ENCODE measurements at regions of chr11 and their contacts with region 1.

Region 1: DNA sequence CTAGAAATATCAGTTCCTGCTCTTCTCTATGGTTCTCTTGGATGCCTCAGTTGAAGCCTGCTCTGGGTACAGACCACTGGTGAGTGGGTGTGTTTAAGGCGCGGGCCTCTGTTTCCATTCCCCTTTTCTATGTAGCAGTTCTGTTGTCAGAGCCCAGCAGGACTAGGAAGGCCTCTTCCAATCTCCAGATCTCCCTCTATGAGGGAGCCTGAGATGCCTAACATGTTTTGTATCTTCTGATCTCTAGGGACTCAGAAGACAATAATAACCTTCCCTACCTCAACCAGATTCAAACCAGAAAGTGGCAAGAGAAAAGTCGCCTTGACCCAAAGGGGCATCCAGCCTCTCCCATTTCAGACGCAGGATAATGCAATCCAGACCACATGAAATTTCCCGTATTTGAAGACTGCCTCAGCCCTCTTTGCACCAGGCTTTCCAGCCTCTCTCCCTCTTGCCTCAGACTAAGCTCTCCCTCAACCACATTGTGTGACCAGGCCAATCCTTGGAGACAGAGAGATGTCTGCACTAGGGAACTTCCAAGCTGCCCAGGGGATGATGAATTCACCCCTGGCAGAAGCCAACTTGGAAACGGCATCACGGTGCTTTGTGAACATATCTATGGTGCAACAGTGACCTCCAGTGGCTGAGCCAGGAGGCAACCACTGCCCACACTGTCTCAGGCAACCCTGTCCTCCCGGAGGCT is 150.1 kb upstream of the UBASH3B start:
- DNase-seq: peak; percentile 84
- H3K4me3 ChIP-seq: no peak overlapping the region
- H3K27ac ChIP-seq: no peak overlapping the region
- H3K4me1 ChIP-seq: no peaks in the 10 kb centered on the region
- H3K27me3 ChIP-seq: peaks cover 2% of the 10 kb centered on the region
- CTCF ChIP-seq: peak; percentile 93 to 97

Region 2: GRCh38 chr11:121318848-121319834 is 1186.3 kb before region 1 on chr11:
- CTCF ChIA-PET with region 1: no interaction called
- dilution Hi-C with region 1: no loop called
- in situ Hi-C with region 1: no loop called
- intact Hi-C with region 1: loop called (anchors 1 kb)
- DNase-seq: peak; percentile 49
- H3K4me3 ChIP-seq: no peak overlapping the region
- H3K27ac ChIP-seq: no peak overlapping the region
- H3K4me1 ChIP-seq: peaks cover 4% of the 10 kb centered on the region
- H3K27me3 ChIP-seq: no peaks in the 10 kb centered on the region
- CTCF ChIP-seq: peak; percentile 79 to 89

Region 3: DNA sequence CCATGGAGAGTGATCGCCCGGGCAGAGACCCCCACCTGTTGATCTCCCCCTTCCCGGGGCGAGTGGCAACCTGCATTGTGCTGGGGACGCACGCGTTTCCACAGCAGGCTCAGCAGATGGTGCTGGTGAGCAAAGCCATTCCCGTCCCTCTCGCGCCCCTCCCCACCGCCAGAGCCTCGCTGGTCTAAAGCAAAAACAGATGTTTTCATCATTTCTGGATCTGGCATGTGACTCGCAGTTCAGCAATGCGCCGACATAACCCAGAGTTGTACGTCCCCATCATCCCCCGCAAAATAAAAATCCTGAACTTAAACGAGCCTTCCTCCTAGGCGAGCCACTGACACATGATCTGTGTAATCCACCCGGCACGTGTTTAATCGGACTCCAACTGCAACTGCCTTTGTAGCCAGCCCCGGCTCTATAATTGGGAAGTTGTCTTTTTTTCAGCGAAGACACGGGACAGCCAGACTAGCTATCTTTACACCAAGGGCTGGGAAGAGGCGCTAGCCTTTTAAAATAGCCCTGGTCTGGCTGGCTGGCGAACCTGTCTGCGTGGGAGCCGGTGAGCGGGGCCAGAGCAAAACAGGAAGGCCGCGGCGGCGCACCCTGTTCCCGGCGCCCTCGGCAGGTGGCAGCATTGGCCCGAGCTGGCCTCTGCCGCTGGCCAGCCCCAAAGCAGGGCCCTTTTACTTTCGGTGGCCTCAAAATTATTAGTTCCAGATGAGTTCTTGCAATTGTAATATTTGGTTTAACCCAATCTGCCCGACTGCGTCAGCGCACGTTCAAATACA is 849.7 kb before region 1 on chr11:
- CTCF ChIA-PET with region 1: no interaction called
- dilution Hi-C with region 1: no loop called
- in situ Hi-C with region 1: loop called (anchors 5 kb)
- intact Hi-C with region 1: loop called (anchors 1 kb)
- DNase-seq: peak; percentile 73
- H3K4me3 ChIP-seq: peak overlapping the region; percentile 45 to 59 (median 56)
- H3K27ac ChIP-seq: peak overlapping the region; percentile 58
- H3K4me1 ChIP-seq: peaks cover 20% of the 10 kb centered on the region
- H3K27me3 ChIP-seq: no peaks in the 10 kb centered on the region
- CTCF ChIP-seq: peak; percentile 77 to 97

Region 4: DNA sequence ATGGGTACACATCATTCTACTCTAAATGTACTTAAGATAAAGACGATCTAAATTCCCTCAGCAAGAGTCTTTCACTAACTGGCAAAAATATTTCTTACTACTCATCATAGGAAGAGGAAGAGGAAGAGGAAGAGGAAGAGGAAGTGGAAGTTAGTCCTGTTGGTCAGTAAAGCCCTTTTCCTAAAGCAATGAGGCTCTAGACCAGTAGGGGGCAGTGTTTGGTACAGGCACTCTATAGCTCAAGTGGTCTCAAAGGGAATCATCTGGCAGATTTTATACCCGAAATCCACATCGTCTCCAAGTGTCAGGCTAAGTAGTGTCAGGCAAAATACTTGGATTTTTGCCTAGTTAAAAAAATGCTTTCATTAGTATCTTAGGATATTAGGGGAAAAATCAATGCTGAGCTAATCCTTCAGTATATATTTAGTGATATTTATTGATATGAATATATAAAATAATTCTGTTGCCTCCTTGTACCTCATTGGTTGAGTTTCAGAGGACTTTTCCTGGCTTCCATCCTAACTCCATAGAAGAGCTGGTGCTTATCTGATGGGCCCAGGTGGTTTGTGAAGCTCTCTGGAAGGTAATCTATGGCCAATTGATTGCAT is 397.2 kb before region 1 on chr11:
- CTCF ChIA-PET with region 1: no interaction called
- dilution Hi-C with region 1: no loop called
- in situ Hi-C with region 1: loop called (anchors 25 kb)
- intact Hi-C with region 1: no loop called
- DNase-seq: no peak
- H3K4me3 ChIP-seq: no peak overlapping the region
- H3K27ac ChIP-seq: no peak overlapping the region
- H3K4me1 ChIP-seq: peaks cover 28% of the 10 kb centered on the region
- H3K27me3 ChIP-seq: no peaks in the 10 kb centered on the region
- CTCF ChIP-seq: peak; percentile 64 to 83

Region 5: GRCh38 chr11:122215244-122215992 is 290.0 kb before region 1 on chr11:
- CTCF ChIA-PET with region 1: interaction called, 6 read pairs
- dilution Hi-C with region 1: no loop called
- in situ Hi-C with region 1: loop called (anchors 5 kb)
- intact Hi-C with region 1: loop called (anchors 1 kb)
- DNase-seq: no peak
- H3K4me3 ChIP-seq: no peak overlapping the region
- H3K27ac ChIP-seq: no peak overlapping the region
- H3K4me1 ChIP-seq: peaks cover under 1% of the 10 kb centered on the region
- H3K27me3 ChIP-seq: no peaks in the 10 kb centered on the region
- CTCF ChIP-seq: peak; percentile 92 to 98

Region 6: GRCh38 chr11:122360875-122361274 is 144.6 kb before region 1 on chr11:
- CTCF ChIA-PET with region 1: no interaction called
- dilution Hi-C with region 1: no loop called
- in situ Hi-C with region 1: no loop called
- intact Hi-C with region 1: no loop called
- DNase-seq: no peak
- H3K4me3 ChIP-seq: no peak overlapping the region
- H3K27ac ChIP-seq: no peak overlapping the region
- H3K4me1 ChIP-seq: no peaks in the 10 kb centered on the region
- H3K27me3 ChIP-seq: no peaks in the 10 kb centered on the region
- CTCF ChIP-seq: peak; percentile 11

Measured in mammary epithelial cell (primary cell).